Naive thymus-derived CD4-positive, alpha-beta T cell (primary cell): ENCODE measurements at regions of chr11 and their contacts with region 1.

Region 1: DNA sequence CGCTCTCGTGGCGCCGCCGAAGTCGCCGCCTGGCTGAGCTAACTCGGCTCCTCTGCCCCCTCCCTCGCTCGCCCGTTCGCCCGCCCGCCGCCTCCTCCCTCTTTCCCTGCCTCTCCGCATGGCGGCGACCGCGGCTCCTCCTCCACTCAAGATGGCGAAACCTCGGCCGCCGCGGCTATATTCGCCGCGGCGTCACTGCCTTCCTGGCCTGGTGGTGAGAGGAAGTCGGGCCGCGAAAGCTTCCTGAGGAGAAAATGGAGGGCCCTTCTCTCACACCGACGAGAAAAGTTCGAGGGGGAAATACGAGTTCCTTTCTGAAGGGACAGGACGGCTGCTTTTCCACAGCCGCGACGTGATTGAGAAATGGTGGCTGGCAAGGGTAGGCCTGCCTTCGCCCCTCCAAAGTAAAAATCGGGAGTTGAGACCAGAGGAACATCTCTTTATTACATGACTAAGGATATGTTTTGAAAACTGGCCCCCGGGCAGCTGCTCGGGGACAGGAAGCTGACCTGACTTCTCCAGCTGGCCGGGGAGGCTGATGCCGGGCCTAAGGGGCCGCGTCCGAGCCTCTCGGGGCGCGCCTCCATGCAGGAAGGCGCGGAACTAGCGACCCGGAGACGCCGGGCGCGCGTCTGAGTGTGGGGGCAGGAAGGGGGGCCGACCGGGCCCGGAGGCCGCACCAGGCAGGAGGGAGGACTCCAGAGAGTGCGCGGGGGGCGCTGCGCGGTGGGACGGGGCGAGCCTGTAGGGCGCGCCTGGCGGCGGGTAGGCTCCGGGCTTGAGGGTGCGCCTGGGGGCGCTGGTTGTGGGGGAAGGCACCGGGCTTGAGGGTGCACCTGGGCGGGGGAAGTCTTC is at the start of gene DDX6:
- DNase-seq: peak; percentile 84 to 92 (median 89)
- ATAC-seq: peak; percentile 79
- H3K4me3 ChIP-seq: peak within 1 kb of the TSS; percentile 78
- H3K4me3 Mint-ChIP-seq: peak within 1 kb of the TSS; percentile 92 to 100 (median 98)
- H3K27ac ChIP-seq: peak within 1 kb of the TSS; percentile 99
- H3K27ac Mint-ChIP-seq: peak within 1 kb of the TSS; percentile 95 to 100 (median 99)
- H3K4me1 ChIP-seq: peaks cover 15 to 24% of the 10 kb centered on the region in 2 donors
- H3K4me1 Mint-ChIP-seq: peaks cover 20 to 38% (median 28%) of the 10 kb centered on the region in 7 donors
- H3K27me3 ChIP-seq: no peaks in the 10 kb centered on the region
- H3K27me3 Mint-ChIP-seq: no peaks in the 10 kb centered on the region
- total RNA-seq, gene DDX6: 154 to 346 (median 272) TPM

Region 2: GRCh38 chr11:118659314-118659952 is 131.9 kb before region 1 on chr11:
- CTCF ChIA-PET with region 1: no interaction called
- POLR2A ChIA-PET with region 1: interaction called, 3 read pairs
- intact Hi-C with region 1: loop called in 1 of 2 experiments (anchors 1 kb)
- DNase-seq: peak; percentile 75 to 88 (median 84)
- ATAC-seq: peak; percentile 99
- H3K4me3 ChIP-seq: no peak overlapping the region
- H3K4me3 Mint-ChIP-seq: peak overlapping the region in 2 of 10 donors; percentile 56 to 64
- H3K27ac ChIP-seq: no peak overlapping the region
- H3K27ac Mint-ChIP-seq: peak overlapping the region in 1 of 9 donors; percentile 1
- H3K4me1 ChIP-seq: peaks cover 0 to 7% of the 10 kb centered on the region in 2 donors
- H3K4me1 Mint-ChIP-seq: peaks cover 0 to 12% (median 6%) of the 10 kb centered on the region in 7 donors
- H3K27me3 ChIP-seq: no peaks in the 10 kb centered on the region
- H3K27me3 Mint-ChIP-seq: no peaks in the 10 kb centered on the region

Region 3: DNA sequence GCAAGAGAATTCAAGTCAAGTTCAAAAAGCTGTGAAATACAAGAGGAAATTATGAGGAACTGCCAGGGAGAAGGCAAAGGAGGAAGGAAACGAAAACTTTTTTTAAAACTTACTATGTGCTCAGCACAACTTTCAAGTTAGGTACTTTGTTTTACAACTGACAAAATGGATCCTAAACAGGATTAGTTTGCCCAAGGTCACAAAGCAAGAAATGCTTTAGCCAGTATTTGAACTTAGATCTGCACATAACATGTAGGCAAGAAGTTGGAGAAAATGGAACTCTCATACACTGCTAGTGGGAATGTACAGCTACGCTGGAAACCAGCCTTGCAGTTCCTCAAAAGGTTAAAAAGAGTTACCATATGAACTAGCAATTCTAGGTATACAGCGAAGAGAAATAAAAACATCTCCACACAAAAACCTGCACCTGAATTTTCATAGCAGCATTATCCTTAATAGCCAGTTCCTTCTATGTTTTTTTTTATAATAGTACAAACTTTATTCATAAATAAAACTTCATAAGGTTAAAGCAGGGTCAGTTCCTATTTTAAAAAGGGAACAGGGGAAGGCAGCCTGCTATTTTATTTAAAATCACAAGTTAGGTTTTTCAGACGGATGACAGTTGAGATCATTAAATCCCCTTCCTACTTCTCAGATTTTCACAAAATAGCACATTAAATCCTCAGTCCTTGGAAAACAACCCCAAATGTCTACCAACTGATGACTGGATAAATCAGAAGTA is 19.6 kb before region 1 on chr11:
- CTCF ChIA-PET with region 1: interaction called, 3 read pairs
- POLR2A ChIA-PET with region 1: interaction called, 16 read pairs
- intact Hi-C with region 1: loop called in 1 of 2 experiments (anchors 2 kb)
- DNase-seq: no peak
- ATAC-seq: peak; percentile 31
- H3K4me3 ChIP-seq: no peak overlapping the region
- H3K4me3 Mint-ChIP-seq: peak overlapping the region; percentile 7 to 83 (median 73)
- H3K27ac ChIP-seq: peak overlapping the region; percentile 57
- H3K27ac Mint-ChIP-seq: peak overlapping the region in 8 of 9 donors; percentile 42 to 92 (median 80)
- H3K4me1 ChIP-seq: peaks cover 54 to 76% of the 10 kb centered on the region in 2 donors
- H3K4me1 Mint-ChIP-seq: peaks cover 55 to 97% (median 88%) of the 10 kb centered on the region in 7 donors
- H3K27me3 ChIP-seq: no peaks in the 10 kb centered on the region
- H3K27me3 Mint-ChIP-seq: no peaks in the 10 kb centered on the region

Region 4: GRCh38 chr11:118870396-118871345 is 79.3 kb after region 1 on chr11:
- CTCF ChIA-PET with region 1: interaction called, 30 read pairs
- POLR2A ChIA-PET with region 1: interaction called, 437 read pairs
- intact Hi-C with region 1: loop called in 1 of 2 experiments (anchors 1 kb)
- DNase-seq: peak in 6 of 9 donors; percentile 44 to 54 (median 51)
- ATAC-seq: peak; percentile 28
- H3K4me3 ChIP-seq: peak overlapping the region; percentile 60
- H3K4me3 Mint-ChIP-seq: peak overlapping the region; percentile 67 to 91 (median 82)
- H3K27ac ChIP-seq: peak overlapping the region; percentile 94
- H3K27ac Mint-ChIP-seq: peak overlapping the region; percentile 94 to 100 (median 99)
- H3K4me1 ChIP-seq: peaks cover 51 to 58% of the 10 kb centered on the region in 2 donors
- H3K4me1 Mint-ChIP-seq: peaks cover 29 to 61% (median 57%) of the 10 kb centered on the region in 7 donors
- H3K27me3 ChIP-seq: no peaks in the 10 kb centered on the region
- H3K27me3 Mint-ChIP-seq: no peaks in the 10 kb centered on the region

Region 5: DNA sequence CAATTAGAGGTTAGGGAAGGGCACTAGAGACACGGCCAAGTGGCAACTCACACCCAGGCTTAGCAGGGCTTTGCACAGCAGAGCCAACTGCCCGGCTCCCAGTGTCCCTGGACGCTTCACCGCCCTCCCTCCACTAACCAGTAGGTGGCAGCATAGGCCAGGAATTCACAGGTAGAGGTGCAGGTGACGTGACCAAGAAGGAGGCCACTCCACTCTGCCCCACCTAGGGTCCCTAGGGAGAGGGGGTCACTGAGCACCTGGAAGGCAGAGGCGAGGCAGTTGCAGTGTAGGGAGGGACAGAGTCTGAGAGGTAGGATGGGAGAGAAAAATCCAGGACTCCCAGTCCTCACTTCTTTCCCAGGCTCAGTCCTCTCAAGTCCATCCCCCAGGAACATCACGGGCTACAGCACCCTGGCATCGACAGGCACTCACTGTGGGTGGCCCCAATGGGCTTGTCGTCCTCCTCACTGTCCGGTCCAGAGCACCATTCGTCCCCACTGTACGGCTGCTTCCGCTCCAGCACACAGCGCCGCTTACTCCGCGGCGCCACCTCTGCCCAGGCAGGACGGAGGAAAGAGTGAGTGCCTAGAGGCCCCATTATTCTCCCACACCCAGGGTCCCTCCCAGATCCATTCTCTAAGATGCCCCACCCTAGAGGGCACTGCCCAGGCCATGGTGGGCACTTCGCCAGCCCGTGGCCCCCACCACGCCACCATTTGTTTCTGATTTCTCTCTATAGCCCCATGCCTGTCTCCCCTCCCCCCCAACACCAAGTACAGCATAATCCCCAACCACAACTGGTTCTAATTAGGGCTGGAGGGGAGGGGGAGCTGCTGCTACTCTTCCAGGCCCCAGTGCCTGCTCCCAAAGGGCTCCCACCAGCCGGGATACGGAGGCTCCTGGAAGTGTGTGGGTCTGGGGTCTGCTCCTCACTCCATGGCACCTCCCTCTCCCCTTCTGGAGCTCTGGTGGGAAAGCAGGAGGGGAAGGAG is 116.0 kb after region 1 on chr11:
- CTCF ChIA-PET with region 1: interaction called, 6 read pairs
- POLR2A ChIA-PET with region 1: interaction called, 201 read pairs
- intact Hi-C with region 1: loop called (anchors 1 to 5 kb)
- DNase-seq: peak; percentile 73 to 91 (median 82)
- ATAC-seq: peak; percentile 83
- H3K4me3 ChIP-seq: no peak overlapping the region
- H3K4me3 Mint-ChIP-seq: peak overlapping the region in 9 of 10 donors; percentile 15 to 99 (median 56)
- H3K27ac ChIP-seq: peak overlapping the region; percentile 96
- H3K27ac Mint-ChIP-seq: peak overlapping the region; percentile 80 to 96 (median 93)
- H3K4me1 ChIP-seq: peaks cover 28 to 50% of the 10 kb centered on the region in 2 donors
- H3K4me1 Mint-ChIP-seq: peaks cover 30 to 53% (median 46%) of the 10 kb centered on the region in 7 donors
- H3K27me3 ChIP-seq: no peaks in the 10 kb centered on the region
- H3K27me3 Mint-ChIP-seq: no peaks in the 10 kb centered on the region

Region 6: GRCh38 chr11:118997627-118998387 is 206.5 kb after region 1 on chr11 and contains the start of gene CENATAC:
- CTCF ChIA-PET with region 1: no interaction called
- POLR2A ChIA-PET with region 1: interaction called, 8 read pairs
- intact Hi-C with region 1: loop called (anchors 2 to 5 kb)
- DNase-seq: peak; percentile 91 to 98 (median 94)
- ATAC-seq: peak; percentile 98
- H3K4me3 ChIP-seq: peak within 1 kb of the TSS; percentile 91
- H3K4me3 Mint-ChIP-seq: peak within 1 kb of the TSS; percentile 87 to 99 (median 94)
- H3K27ac ChIP-seq: peak within 1 kb of the TSS; percentile 85
- H3K27ac Mint-ChIP-seq: peak within 1 kb of the TSS; percentile 87 to 98 (median 92)
- H3K4me1 ChIP-seq: peaks cover 6 to 16% of the 10 kb centered on the region in 2 donors
- H3K4me1 Mint-ChIP-seq: peaks cover 26 to 45% (median 37%) of the 10 kb centered on the region in 7 donors
- H3K27me3 ChIP-seq: no peaks in the 10 kb centered on the region
- H3K27me3 Mint-ChIP-seq: no peaks in the 10 kb centered on the region
- total RNA-seq, gene CENATAC: 53.5 to 136 (median 109) TPM